Left ventricle myocardium superior (tissue), 1 donor: ENCODE measurements at regions of chr1 and their contacts with region 1.

Region 1: DNA sequence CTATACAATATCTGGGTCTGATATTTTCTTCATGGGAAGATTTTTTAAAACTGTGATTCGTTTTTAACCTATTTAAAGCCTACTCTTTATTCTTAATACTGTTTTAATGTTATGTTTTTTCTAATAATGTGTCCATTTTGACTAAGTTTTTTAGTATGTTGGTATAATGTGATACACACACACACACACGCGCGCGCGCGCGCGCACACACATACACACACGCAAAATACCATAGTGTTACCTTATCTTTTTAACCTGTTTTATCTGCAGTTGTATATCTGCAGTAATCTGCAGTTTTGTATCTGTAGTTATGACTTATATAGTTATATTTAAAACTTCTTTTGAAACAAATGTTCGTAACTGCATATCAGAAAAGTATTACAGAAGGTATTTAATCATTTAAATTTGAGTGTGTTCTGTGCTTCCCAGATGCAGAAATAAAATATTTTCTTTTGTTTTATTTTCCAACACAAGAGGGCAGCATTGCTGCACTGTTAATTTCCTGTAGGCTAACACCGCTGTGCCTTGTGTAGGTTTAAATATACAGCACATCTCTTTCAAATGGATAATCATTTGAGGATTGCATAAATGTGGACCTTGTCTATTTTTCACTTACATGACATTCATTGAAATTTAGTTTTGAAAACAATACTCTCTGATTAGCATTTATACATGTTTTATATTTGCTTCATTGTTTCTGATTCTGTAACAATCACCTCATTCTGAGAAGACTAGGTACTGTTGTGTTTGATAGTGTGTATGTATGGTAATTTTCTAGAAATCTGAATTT is 166.1 kb downstream of the PDE4B start:
- DNase-seq: peak; percentile 42
- ATAC-seq: peak; percentile 31

Region 2: GRCh38 chr1:66242646-66243547 is 284.1 kb after region 1 on chr1:
- intact Hi-C with region 1: loop called (anchors 2 kb)
- DNase-seq: peak; percentile 91
- ATAC-seq: peak; percentile 99